ENCODE measurements at regions of chr18 and their contacts with region 1.

Region 1: DNA sequence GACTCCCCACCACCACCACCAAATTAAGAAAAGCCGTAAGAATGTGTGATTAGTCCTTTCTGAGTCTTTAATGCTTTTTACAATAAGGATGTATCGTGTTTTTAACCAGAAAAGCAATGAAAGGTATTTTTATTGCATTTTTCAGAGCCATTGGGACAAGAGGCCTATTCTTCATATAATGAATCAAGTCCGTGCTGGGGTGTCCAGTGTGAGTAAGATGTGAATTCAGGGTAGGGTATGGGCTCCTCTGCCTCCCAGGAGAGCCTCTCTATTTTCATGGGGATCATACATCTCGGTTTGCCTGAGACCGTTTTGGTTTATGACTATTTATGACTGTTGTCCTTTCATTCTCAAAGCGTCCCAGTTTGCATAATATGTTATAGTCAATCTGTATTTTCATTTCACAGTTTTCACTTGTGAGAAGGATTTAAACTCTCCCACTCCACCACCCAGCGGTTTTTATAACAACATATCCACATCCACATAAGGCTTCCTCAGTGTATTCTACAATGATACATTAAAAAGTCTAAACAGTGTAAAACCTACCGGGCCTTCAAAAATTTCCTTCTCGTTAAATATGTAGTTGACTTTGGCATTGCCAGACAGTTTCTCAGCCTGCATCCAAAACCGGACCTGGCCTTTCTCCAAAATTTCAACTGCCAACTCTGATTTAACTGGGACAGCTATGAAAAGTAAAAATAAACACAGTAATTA is 80.8 kb upstream of the LPIN2 start:
- DNase-seq: no peak
- H3K4me3 Mint-ChIP-seq: no peak overlapping the region
- H3K27ac Mint-ChIP-seq: no peak overlapping the region
- H3K4me1 Mint-ChIP-seq: peaks cover 16% of the 10 kb centered on the region
- H3K27me3 Mint-ChIP-seq: no peaks in the 10 kb centered on the region

Region 2: DNA sequence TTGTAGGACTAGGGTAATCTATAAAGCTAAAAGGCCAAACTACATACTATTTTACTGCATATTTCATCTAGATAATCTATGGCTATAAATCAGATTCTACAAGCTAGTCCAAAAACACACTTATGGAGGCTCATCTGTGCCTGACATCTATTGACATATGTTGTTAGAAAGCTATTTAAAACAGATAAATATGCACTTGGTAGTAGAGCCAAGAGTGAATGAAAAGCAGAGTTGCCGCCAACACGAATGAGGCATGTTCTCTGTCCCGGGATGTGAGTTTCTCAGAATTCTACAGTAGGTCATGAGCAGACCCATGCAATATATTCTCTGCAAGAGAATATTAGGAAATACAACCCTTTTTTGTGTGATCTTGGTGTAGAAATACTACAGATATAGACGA is 14.1 kb before region 1 on chr18:
- CTCF ChIA-PET with region 1: interaction called, 9 read pairs
- intact Hi-C with region 1: loop called (anchors 2 kb)
- DNase-seq: no peak
- H3K4me3 Mint-ChIP-seq: no peak overlapping the region
- H3K27ac Mint-ChIP-seq: no peak overlapping the region
- H3K4me1 Mint-ChIP-seq: peaks cover 8% of the 10 kb centered on the region
- H3K27me3 Mint-ChIP-seq: no peaks in the 10 kb centered on the region

Measured in activated naive CD4-positive, alpha-beta T cell treated with anti-CD3 and anti-CD28 coated beads for 36 hours (primary cell).